ENCODE measurements at regions of chr10 and their contacts with region 1.

Region 1: DNA sequence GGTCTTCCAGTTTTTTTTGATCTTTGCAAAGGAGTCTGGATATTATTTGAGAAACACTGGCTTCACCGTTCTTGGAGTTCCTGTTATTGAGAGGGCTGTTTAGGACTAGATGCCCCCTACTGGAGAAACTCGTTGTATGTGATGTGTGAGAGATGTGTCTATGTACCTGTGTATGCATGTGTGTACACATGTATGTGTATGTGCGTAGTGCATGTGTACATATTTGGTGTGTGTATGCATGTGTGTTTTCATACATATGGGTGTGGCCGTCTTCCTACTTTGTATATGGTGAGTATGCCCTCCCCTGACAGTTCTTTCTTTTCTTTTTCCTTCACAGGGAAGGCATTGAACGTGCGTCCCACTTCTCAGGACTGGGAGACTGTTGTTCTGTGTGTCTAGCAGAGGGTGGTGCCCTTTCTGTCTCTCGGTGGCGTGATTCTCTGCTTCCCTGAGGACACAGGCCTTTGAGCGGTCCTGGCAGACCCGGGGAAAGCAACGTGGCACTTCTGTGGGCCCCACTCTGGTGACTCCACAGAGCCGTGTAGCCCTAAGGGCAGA is 3.0 kb upstream of the CALHM3 start:
- DNase-seq: peak; percentile 46
- ATAC-seq: peak; percentile 79
- H3K4me3 Mint-ChIP-seq: no peak overlapping the region
- H3K27ac Mint-ChIP-seq: no peak overlapping the region
- H3K4me1 Mint-ChIP-seq: peaks cover 4% of the 10 kb centered on the region
- H3K27me3 Mint-ChIP-seq: no peaks in the 10 kb centered on the region
- CTCF ChIP-seq: peak; percentile 69

Region 2: GRCh38 chr10:103316087-103316486 is 166.0 kb before region 1 on chr10:
- CTCF ChIA-PET with region 1: no interaction called
- POLR2A ChIA-PET with region 1: no interaction called
- intact Hi-C with region 1: no loop called
- DNase-seq: no peak
- ATAC-seq: no peak
- H3K4me3 Mint-ChIP-seq: no peak overlapping the region
- H3K27ac Mint-ChIP-seq: no peak overlapping the region
- H3K4me1 Mint-ChIP-seq: no peaks in the 10 kb centered on the region
- H3K27me3 Mint-ChIP-seq: no peaks in the 10 kb centered on the region
- CTCF ChIP-seq: no peak

Region 3: DNA sequence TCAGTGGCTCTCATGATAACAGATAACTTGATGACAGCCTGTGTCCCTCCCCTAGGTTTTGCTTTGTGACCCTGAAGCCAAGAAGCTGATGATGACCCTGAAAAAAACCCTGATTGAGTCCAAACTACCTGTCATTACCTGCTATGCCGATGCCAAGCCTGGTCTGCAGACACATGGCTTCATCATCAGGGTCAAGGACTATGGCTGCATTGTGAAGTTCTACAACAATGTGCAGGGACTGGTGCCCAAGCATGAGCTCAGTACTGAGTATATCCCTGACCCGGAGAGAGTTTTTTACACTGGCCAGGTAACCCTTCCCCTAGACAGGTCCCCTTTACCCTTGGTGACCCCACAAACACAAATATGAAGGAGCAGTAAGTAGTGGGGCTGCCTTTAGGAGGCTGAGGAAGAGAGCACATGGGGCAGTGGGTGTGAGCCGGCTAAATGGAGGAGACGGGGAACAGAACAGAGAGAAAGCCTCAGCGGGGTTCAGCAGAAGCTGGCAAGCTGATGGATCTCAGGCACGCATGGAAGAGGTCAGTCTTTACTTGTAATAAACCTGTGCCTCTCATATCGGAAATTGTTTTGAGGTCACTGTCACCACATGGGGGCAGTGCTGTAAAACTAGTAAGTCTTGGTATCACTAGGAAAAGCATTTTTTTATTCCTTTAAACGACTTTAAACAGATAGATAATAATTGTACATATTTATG is 65.5 kb before region 1 on chr10:
- CTCF ChIA-PET with region 1: interaction called, 72 read pairs
- POLR2A ChIA-PET with region 1: interaction called, 3 read pairs
- intact Hi-C with region 1: loop called (anchors 1 kb)
- DNase-seq: peak; percentile 78
- ATAC-seq: peak; percentile 47
- H3K4me3 Mint-ChIP-seq: no peak overlapping the region
- H3K27ac Mint-ChIP-seq: no peak overlapping the region
- H3K4me1 Mint-ChIP-seq: no peaks in the 10 kb centered on the region
- H3K27me3 Mint-ChIP-seq: no peaks in the 10 kb centered on the region
- CTCF ChIP-seq: peak; percentile 81

Region 4: GRCh38 chr10:103423748-103424147 is 58.3 kb before region 1 on chr10:
- CTCF ChIA-PET with region 1: interaction called, 72 read pairs
- POLR2A ChIA-PET with region 1: no interaction called
- intact Hi-C with region 1: no loop called
- DNase-seq: no peak
- ATAC-seq: no peak
- H3K4me3 Mint-ChIP-seq: no peak overlapping the region
- H3K27ac Mint-ChIP-seq: no peak overlapping the region
- H3K4me1 Mint-ChIP-seq: peaks cover 16% of the 10 kb centered on the region
- H3K27me3 Mint-ChIP-seq: no peaks in the 10 kb centered on the region
- CTCF ChIP-seq: no peak

Region 5: DNA sequence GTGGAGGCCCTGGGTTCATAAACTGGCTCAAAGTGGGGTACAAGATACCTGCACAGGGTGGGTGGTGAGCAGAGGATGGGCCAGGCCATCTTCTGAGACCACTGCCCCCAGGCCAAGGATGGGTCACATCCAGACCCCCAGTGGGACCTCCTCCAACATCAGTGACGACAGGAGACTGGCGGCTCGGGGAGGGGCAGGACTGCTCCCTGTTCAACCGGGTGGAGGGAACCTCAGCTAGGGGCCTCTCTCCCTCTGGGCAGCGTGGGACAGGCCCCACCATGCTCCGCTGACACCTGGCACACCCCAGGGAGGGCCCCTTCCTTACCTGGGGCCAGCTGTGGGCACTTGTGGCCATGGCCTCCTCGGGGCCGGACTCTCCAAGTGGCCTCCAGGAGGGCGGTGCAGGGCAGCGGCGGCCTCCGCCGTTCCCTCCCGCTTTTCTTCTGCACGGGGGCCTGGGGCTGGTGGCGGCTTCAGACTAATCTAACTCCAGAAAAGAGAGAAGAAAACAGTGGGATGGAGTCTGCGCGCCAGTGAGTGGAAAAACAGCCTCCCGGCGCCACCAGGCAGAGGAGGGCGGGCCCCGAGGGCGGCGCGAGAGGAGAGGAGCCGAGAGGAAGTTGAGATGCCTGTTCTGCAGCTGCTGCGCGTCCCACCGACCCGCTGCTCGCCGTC is 30.1 kb before region 1 on chr10 and contains the start of gene CALHM2:
- CTCF ChIA-PET with region 1: interaction called, 38 read pairs
- POLR2A ChIA-PET with region 1: interaction called, 3 read pairs
- intact Hi-C with region 1: loop called (anchors 5 kb)
- DNase-seq: peak; percentile 73
- ATAC-seq: peak; percentile 76
- H3K4me3 Mint-ChIP-seq: peak within 1 kb of the TSS; percentile 80
- H3K27ac Mint-ChIP-seq: peak within 1 kb of the TSS; percentile 80
- H3K4me1 Mint-ChIP-seq: peaks cover 36% of the 10 kb centered on the region
- H3K27me3 Mint-ChIP-seq: no peaks in the 10 kb centered on the region
- CTCF ChIP-seq: no peak
- total RNA-seq, gene CALHM2: 7.6 to 9.5 TPM

Region 6: GRCh38 chr10:103470761-103471653 is 11.0 kb before region 1 on chr10:
- CTCF ChIA-PET with region 1: interaction called, 42 read pairs
- POLR2A ChIA-PET with region 1: interaction called, 3 read pairs
- intact Hi-C with region 1: no loop called
- DNase-seq: peak; percentile 90
- ATAC-seq: peak; percentile 95
- H3K4me3 Mint-ChIP-seq: peak overlapping the region; percentile 58
- H3K27ac Mint-ChIP-seq: peak overlapping the region; percentile 88
- H3K4me1 Mint-ChIP-seq: peaks cover 19% of the 10 kb centered on the region
- H3K27me3 Mint-ChIP-seq: no peaks in the 10 kb centered on the region
- CTCF ChIP-seq: no peak

Region 7: DNA sequence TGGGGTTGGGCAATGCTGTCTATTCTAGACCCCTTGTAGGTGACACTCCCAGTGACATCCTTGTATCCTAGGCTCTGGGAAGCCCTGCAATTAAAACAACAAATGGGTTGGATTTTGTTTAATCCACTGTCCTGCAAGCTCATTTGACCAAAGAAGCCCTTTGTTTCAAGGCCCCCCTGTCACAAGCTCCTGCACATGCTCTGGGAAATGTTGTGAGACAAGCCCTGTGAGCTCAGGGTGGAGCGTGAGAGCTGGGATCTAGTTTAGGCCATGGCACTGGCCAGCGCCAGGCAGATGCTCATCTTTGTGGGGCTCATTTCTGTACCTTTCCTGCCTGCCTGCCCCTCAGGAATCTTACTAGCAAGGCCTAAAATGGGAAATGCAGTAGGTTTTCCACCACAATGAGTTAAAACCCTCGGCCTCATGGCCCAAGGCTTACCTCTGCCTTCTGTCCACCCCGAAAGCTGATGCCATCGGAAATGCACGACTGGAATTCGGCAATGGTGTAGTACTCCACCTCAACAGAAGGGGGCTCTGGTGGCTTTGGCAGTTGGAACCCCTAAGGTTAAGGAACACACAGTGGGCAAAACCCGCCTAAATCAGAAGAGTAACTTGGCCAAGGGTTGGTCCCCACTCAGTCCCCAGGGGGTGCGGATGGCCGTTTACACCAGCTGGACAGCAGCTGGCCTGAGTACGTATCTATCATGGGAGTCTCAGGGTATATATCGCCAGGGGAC is 123.5 kb after region 1 on chr10:
- CTCF ChIA-PET with region 1: no interaction called
- POLR2A ChIA-PET with region 1: no interaction called
- intact Hi-C with region 1: no loop called
- DNase-seq: peak; percentile 58
- ATAC-seq: peak; percentile 79
- H3K4me3 Mint-ChIP-seq: no peak overlapping the region
- H3K27ac Mint-ChIP-seq: no peak overlapping the region
- H3K4me1 Mint-ChIP-seq: no peaks in the 10 kb centered on the region
- H3K27me3 Mint-ChIP-seq: no peaks in the 10 kb centered on the region
- CTCF ChIP-seq: peak; percentile 77

Region 8: GRCh38 chr10:103872137-103872931 is 390.3 kb after region 1 on chr10:
- CTCF ChIA-PET with region 1: no interaction called
- POLR2A ChIA-PET with region 1: no interaction called
- intact Hi-C with region 1: no loop called
- DNase-seq: no peak
- ATAC-seq: no peak
- H3K4me3 Mint-ChIP-seq: no peak overlapping the region
- H3K27ac Mint-ChIP-seq: no peak overlapping the region
- H3K4me1 Mint-ChIP-seq: no peaks in the 10 kb centered on the region
- H3K27me3 Mint-ChIP-seq: no peaks in the 10 kb centered on the region
- CTCF ChIP-seq: no peak